ENCODE measurements at regions of chr11 and their contacts with region 1.

Region 1: DNA sequence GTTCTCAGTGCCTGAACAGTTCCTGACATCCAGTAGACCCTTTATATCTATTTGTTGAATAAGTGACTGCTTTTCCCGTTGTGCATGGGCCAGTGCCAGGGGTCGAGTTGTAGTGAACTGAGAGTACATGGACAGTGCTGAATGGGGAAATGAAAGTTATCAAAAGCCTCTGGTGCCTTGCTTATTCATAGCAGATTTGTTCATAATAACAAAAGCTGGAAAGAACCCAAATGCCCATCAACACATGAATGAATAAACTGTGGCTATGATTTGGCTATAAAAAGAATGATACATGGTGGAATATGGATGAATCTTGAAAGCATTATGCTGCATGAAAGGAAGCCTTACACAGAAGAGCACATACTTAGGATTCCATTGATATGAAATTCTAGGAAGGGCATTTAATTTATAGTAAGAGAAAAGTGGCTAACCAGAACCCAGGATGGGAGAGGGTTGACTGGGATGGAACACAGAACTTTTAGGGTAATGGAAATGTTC is 42.6 kb downstream of the PACS1 start:
- H3K4me3 ChIP-seq: no peak overlapping the region
- H3K27ac ChIP-seq: no peak overlapping the region
- H3K4me1 ChIP-seq: peaks cover 9% of the 10 kb centered on the region; the same call in 1 of the 2 replicates
- CTCF ChIP-seq: no peak

Region 2: DNA sequence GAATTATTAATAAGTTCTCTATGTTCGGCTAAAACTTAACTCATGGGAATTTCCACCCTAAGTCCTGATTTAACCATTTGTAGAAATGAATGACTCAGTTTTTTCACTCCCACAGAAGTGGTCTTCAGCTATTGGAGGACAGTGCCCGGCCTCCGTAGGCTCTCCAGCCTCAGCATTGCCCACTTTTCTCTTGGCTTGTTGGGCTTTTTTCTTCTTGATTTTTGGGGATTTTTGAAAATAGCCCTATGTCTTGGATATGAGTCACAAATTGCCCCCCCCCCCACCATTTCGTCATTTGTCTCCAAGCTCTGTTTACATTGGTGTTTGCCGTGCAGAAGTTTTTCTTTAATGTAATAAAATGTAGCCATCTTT is 24.1 kb after region 1 on chr11:
- CTCF ChIA-PET with region 1: interaction called, 30 read pairs
- POLR2A ChIA-PET with region 1: interaction called, 5 read pairs
- H3K4me3 ChIP-seq: no peak overlapping the region
- H3K27ac ChIP-seq: no peak overlapping the region
- H3K4me1 ChIP-seq: no peaks in the 10 kb centered on the region
- CTCF ChIP-seq: no peak

Region 3: GRCh38 chr11:66188580-66188979 is 75.9 kb after region 1 on chr11:
- CTCF ChIA-PET with region 1: no interaction called
- POLR2A ChIA-PET with region 1: no interaction called
- H3K4me3 ChIP-seq: no peak overlapping the region
- H3K27ac ChIP-seq: no peak overlapping the region
- H3K4me1 ChIP-seq: no peaks in the 10 kb centered on the region
- CTCF ChIP-seq: no peak